ENCODE measurements at regions of chr16 and their contacts with region 1.

Region 1: GRCh38 chr16:19919142-19919541 is 34.5 kb upstream of the GPRC5B start:
- DNase-seq: no peak
- CTCF ChIP-seq: no peak

Region 2: GRCh38 chr16:19822533-19822932 is 96.6 kb before region 1 on chr16:
- CTCF ChIA-PET with region 1: no interaction called
- POLR2A ChIA-PET with region 1: no interaction called
- DNase-seq: no peak
- CTCF ChIP-seq: no peak

Region 3: DNA sequence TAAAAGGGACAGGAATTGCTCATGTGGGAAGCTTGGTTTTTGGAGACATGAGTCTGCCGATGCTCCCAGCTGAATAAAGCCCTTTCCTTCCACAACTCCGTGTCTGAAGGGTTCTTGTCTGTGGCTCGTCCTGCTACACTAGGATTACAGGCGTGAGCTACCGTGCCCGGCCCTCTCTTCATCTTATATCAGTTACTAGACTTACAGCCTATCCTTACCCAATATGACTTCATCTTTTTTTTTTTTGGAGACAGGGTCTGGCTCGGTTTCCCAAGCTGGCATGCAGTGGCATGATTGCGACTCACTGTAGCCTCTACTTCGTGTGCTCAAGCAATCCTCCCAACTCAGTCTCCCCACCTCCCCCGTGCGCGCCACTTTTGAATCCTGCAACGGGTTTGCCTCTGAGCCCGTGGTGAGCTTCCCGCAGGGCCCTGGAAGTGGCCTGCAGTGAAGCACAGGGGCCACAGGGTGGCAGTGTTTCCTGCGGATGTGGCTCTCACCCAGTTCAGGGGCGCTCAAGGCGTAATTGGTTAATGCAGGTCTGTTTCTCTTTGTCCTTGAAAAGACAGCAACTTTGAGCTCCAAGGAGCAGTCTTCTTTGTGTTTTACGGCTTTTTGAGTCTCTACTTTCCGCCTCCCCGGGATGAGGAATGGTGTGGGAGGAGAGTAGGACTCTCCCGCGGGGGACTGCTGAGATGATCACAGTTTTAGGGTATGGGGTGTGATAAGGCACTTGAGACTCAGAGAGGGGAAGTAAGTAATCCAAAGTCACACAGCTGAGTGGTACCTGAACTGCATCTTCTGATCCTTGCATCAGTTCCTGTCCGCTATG is 11.8 kb before region 1 on chr16:
- CTCF ChIA-PET with region 1: interaction called, 17 read pairs
- POLR2A ChIA-PET with region 1: no interaction called
- DNase-seq: peak; percentile 76
- CTCF ChIP-seq: peak; percentile 92